Posterior vena cava (tissue), 2 donors: ENCODE measurements at regions of chr2 and their contacts with region 1.

Region 1: DNA sequence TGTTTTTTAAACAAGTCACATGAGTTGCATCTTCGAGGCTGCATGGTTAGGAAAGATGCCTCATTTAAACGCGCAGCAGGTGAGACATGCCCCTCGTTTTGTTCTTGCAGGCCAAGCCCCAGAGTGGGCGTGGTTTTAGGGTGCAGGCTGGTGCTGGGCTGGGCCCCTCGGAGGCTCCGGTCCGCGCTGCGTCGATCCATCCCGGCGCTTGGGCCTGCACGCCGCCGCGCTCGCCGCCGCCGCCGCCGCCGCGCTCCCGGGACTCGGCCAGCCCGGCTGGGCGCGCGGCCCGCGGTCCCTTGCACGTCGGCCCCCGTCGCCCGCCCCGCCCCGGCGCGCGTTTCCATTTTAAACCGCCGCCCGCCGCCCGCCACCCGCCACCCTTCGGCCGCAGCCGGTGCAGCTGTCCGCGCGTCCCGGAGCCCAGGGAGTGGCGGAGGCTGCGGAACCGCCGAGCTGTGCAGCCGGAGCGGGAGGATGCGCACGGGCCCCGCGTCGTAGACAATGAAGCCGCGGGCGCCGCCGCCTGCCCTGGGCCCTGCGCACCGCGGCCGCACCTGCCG is 175.5 kb downstream of the AGAP1 start:
- DNase-seq: peak; percentile 89

Region 2: GRCh38 chr2:235740821-235741220 is 71.5 kb after region 1 on chr2:
- intact Hi-C with region 1: loop called (anchors 5 to 10 kb)
- DNase-seq: no peak

Region 3: GRCh38 chr2:235746257-235747084 is 77.1 kb after region 1 on chr2:
- intact Hi-C with region 1: loop called (anchors 5 to 10 kb)
- DNase-seq: no peak